Activated naive CD4-positive, alpha-beta T cell treated with anti-CD3 and anti-CD28 coated beads for 36 hours (primary cell): ENCODE measurements at regions of chr2 and their contacts with region 1.

Region 1: GRCh38 chr2:105398699-105399432 is at the start of gene FHL2:
- DNase-seq: peak; percentile 73
- H3K4me3 Mint-ChIP-seq: peak within 1 kb of the TSS; percentile 73
- H3K27ac Mint-ChIP-seq: no peak within 1 kb of the TSS
- H3K4me1 Mint-ChIP-seq: peaks cover 9% of the 10 kb centered on the region
- H3K27me3 Mint-ChIP-seq: peaks cover 13% of the 10 kb centered on the region
- total RNA-seq, gene FHL2: 1.6 to 1.8 TPM

Region 2: DNA sequence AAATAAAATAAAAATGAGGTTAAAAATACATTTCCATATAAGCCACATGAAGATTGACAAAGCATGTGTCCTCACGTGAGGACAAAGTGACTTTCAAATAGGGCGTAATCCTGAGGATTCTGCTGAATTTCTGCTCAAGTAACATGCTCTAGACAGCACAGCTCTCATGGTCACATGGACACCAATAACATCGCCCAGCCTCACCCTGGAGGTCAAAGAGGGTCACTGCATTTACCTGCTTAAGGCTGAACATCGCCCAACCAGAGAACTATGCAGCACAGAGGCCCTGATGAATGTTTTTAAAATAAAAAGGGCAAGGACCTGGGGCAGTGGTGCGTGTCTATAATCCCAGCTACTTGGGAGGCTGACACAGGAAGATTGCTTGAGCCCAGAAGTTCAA is 99.6 kb before region 1 on chr2:
- CTCF ChIA-PET with region 1: no interaction called
- intact Hi-C with region 1: no loop called
- DNase-seq: no peak
- H3K4me3 Mint-ChIP-seq: no peak overlapping the region
- H3K27ac Mint-ChIP-seq: no peak overlapping the region
- H3K4me1 Mint-ChIP-seq: peaks cover 19% of the 10 kb centered on the region
- H3K27me3 Mint-ChIP-seq: no peaks in the 10 kb centered on the region

Region 3: GRCh38 chr2:105337124-105338019 is 61.5 kb before region 1 on chr2 and contains the start of gene C2orf49:
- CTCF ChIA-PET with region 1: no interaction called
- intact Hi-C with region 1: loop called (anchors 5 kb)
- DNase-seq: peak; percentile 92
- H3K4me3 Mint-ChIP-seq: peak within 1 kb of the TSS; percentile 99
- H3K27ac Mint-ChIP-seq: peak within 1 kb of the TSS; percentile 100
- H3K4me1 Mint-ChIP-seq: peaks cover 31% of the 10 kb centered on the region
- H3K27me3 Mint-ChIP-seq: no peaks in the 10 kb centered on the region
- total RNA-seq, gene C2orf49: 15.6 to 16.4 TPM

Region 4: DNA sequence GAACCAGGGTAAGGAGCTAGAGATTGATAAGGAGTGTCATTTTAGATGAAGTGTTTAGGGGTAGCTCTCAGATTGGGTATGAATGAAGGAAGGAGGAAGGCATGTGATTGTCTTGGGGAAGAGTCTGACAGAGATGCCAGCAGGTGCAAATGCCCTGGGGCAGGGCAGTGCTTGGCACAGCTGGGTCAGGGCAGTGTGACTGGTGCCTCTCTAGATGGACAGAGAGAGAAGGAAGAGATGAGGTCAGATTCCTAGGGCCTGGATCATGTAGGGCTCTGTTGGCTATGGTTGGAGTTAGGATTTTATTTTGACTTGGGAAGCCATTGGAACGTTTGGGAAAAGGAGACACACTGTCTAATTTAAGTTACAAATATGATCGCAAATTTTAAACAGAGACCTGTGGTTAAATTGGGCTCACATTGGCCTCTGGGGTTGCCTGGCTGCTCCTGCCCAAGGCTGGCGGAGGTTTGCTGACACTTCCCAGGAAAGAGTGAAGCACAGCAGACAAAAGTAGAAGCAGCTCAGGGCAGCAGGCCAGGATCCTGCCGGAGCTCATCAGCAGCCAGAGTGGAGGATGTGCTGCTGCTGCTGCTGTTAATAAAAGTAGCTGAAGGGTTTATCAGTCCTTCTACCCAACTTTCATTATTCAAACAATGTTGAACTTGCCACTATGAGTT is 32.6 kb after region 1 on chr2:
- CTCF ChIA-PET with region 1: no interaction called
- intact Hi-C with region 1: no loop called
- DNase-seq: no peak
- H3K4me3 Mint-ChIP-seq: no peak overlapping the region
- H3K27ac Mint-ChIP-seq: no peak overlapping the region
- H3K4me1 Mint-ChIP-seq: peaks cover 14% of the 10 kb centered on the region
- H3K27me3 Mint-ChIP-seq: no peaks in the 10 kb centered on the region

Region 5: GRCh38 chr2:105468582-105469042 is 69.7 kb after region 1 on chr2:
- CTCF ChIA-PET with region 1: no interaction called
- intact Hi-C with region 1: loop called (anchors 2 kb)
- DNase-seq: peak; percentile 15
- H3K4me3 Mint-ChIP-seq: peak overlapping the region; percentile 57
- H3K27ac Mint-ChIP-seq: peak overlapping the region; percentile 70
- H3K4me1 Mint-ChIP-seq: peaks cover 22% of the 10 kb centered on the region
- H3K27me3 Mint-ChIP-seq: no peaks in the 10 kb centered on the region